ENCODE measurements at regions of chr1 and their contacts with region 1.

Region 1: DNA sequence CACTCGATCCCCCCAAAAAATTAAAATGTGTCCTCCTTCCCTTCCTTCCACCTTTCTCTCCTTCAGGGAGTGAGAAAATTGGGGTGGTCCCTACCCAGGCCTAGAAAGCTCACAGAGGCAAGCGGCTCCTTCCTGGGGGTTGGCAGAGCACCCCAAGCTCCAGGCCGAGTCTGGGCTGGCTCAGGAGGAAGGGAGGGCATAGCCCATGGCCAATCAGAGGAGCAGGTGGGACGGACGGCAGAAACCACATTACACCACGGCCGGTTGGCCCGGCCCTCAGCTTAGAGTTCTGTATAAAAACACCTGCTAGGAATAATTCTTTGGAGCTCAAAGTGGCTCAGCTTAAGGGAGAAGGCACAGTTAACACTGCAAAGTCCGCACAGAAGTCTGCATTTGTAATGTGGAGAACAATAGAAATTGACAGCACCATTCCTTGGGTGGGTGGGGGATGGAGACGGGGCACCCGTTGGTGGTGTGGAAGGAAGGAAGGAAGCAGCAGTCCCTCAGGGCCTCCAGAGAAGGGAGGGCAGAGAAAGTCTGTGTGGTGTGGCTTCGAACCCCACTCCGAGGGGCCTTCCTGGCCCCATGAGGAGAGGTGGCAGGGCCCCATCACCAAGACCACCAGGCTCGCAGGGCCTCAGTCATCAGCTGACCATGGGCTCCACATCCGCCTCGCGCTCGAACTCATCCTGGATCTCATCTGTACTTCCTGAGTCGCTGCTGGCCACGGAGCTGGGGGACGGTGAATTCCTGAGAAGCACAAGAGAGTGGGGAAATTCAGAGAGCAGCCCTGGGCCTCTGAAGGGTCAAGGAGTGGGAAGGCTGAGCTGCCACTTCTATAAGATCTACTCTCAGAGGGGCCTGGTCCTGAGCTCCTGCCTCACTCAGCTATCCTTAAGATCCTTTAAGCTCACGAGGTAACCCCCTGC is 5.8 kb upstream of the ALDH4A1 start:
- DNase-seq: no peak
- H3K4me3 Mint-ChIP-seq: no peak overlapping the region
- H3K27ac Mint-ChIP-seq: no peak overlapping the region
- H3K4me1 Mint-ChIP-seq: peaks cover 14% of the 10 kb centered on the region
- H3K27me3 Mint-ChIP-seq: no peaks in the 10 kb centered on the region

Region 2: DNA sequence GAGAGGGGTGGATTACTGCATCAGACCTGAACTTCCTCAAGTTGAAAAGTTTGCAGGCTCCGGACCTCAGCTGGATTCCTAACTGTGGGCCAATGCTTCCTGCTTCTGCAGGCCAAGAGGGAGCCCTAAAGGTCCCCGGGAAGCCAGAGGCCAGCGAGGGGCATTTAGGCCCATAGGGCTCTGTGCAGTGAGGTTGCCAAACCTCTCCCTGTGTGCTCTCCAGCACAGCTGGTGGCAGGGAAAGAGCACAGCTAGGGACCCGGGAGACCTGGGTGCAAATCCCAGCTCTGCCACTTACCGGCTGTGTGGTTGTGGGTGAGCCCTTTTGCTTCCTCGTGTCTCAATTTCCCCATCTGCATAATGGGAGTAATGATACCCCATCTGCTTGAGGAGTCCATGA is 177.0 kb before region 1 on chr1:
- CTCF ChIA-PET with region 1: no interaction called
- POLR2A ChIA-PET with region 1: no interaction called
- DNase-seq: no peak
- H3K4me3 Mint-ChIP-seq: no peak overlapping the region
- H3K27ac Mint-ChIP-seq: no peak overlapping the region
- H3K4me1 Mint-ChIP-seq: no peaks in the 10 kb centered on the region
- H3K27me3 Mint-ChIP-seq: peaks cover 30% of the 10 kb centered on the region

Region 3: GRCh38 chr1:18972531-18972930 is 64.3 kb after region 1 on chr1:
- CTCF ChIA-PET with region 1: interaction called, 12 read pairs
- POLR2A ChIA-PET with region 1: interaction called, 4 read pairs
- DNase-seq: no peak
- H3K4me3 Mint-ChIP-seq: no peak overlapping the region
- H3K27ac Mint-ChIP-seq: no peak overlapping the region
- H3K4me1 Mint-ChIP-seq: no peaks in the 10 kb centered on the region
- H3K27me3 Mint-ChIP-seq: peaks cover 16% of the 10 kb centered on the region